Kidney (tissue), 22 donors: ENCODE measurements at regions of chr18 and their contacts with region 1.

Region 1: DNA sequence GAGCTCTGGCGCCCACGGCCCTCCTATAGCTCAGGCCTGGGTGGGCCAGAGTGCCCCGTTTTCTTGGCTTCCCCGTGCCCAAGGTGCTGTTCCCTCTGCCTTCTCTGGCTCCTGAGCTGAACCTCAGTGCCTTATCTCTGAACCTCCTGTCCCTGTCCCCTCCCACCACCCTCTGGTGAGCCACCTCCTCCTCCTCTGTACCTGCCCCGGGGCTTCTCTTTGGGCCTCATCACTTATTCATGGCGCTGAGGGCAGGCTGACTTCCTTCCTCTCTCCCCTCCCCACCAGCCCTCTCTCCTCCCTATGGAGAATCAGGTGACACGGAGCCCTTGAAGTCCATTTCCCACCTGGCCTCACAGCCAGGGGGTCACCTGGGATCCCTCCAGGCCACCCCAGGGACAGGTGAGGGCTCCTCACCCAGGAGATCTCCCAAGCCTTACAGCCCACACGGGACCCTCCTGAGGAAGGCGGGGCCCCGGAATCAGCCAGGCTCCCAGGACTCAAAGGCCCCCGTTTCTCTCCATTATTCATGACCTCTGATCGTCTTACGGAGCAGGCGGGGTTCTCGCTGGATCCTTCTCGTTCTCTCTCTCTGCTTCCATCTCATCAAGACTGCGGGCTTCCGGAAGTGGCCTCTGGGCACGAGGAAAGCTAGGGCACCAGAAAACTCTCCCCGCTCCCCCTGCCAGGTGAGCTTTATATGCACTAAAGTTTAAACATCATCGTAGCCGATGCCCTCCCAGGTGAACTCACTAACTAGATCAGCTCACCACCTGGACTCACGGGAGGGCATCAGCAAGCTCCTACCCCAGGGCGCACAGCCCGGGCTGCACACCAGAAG is at the start of gene LOXHD1:
- DNase-seq: peak in 2 of 5 donors; percentile 25 to 43
- H3K4me3 ChIP-seq: no peak within 1 kb of the TSS
- H3K27ac ChIP-seq: no peak within 1 kb of the TSS
- H3K4me1 ChIP-seq: no peaks in the 10 kb centered on the region
- H3K27me3 ChIP-seq: no peaks in the 10 kb centered on the region
- CTCF ChIP-seq: no peak
- total RNA-seq, gene LOXHD1: 0.25 TPM

Region 2: DNA sequence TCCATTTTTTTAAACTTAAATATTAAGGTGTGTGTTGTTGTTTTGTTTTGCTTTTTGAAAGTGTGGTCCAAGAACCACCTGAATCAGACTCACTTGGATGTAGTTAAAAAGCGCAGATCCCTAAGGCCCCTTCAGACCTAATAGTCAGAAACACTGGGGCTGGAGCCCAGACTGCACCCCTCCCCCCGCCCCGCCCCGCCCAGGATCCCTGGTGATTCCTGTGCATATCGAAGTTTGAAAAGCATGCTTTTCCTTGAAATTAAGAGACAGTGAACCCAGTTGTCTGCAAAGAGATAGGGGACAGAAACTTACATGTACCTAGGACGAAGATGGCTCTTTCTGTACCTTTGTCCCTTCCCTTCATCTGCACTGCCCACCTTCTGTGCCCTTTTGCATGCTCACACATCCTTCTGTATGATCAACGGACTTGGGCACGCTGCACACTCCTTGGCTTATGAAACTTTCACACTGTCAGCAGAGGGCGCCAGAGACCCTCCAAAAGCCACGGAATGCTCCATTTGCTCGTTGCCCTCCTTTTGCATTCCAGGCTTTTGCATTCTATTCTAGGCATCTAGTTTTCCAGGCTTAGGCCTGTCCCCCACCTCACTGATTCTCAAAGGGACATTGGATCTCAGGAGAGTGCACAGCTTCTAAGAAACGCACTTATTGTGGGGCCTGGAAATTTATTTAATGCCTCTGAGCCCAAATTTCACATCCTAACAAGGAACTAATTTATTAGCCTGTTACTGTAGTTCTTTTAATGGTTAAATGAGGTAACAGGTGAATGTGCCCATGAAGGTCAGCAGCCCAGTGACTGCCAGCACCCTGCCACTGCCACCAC is 966.1 kb before region 1 on chr18:
- intact Hi-C with region 1: no loop called
- DNase-seq: peak; percentile 77 to 92 (median 87)
- H3K4me3 ChIP-seq: no peak overlapping the region
- H3K27ac ChIP-seq: no peak overlapping the region
- H3K4me1 ChIP-seq: peaks cover 0 to 2% (median 0%) of the 10 kb centered on the region in 3 donors
- H3K27me3 ChIP-seq: no peaks in the 10 kb centered on the region
- CTCF ChIP-seq: peak; percentile 94

Region 3: GRCh38 chr18:46148810-46149209 is 508.5 kb before region 1 on chr18:
- intact Hi-C with region 1: loop called (anchors 10 kb)
- DNase-seq: peak in 4 of 5 donors; percentile 54 to 68 (median 58)
- H3K4me3 ChIP-seq: no peak overlapping the region
- H3K27ac ChIP-seq: no peak overlapping the region
- H3K4me1 ChIP-seq: no peaks in the 10 kb centered on the region
- H3K27me3 ChIP-seq: no peaks in the 10 kb centered on the region
- CTCF ChIP-seq: peak; percentile 44

Region 4: GRCh38 chr18:46281185-46282176 is 375.9 kb before region 1 on chr18:
- intact Hi-C with region 1: loop called (anchors 5 kb)
- DNase-seq: peak; percentile 79 to 86 (median 82)
- H3K4me3 ChIP-seq: no peak overlapping the region
- H3K27ac ChIP-seq: no peak overlapping the region
- H3K4me1 ChIP-seq: no peaks in the 10 kb centered on the region
- H3K27me3 ChIP-seq: no peaks in the 10 kb centered on the region
- CTCF ChIP-seq: peak; percentile 90

Region 5: GRCh38 chr18:46393230-46393629 is 264.1 kb before region 1 on chr18:
- intact Hi-C with region 1: no loop called
- DNase-seq: peak in 1 of 5 donors; percentile 52
- H3K4me3 ChIP-seq: no peak overlapping the region
- H3K27ac ChIP-seq: no peak overlapping the region
- H3K4me1 ChIP-seq: no peaks in the 10 kb centered on the region
- H3K27me3 ChIP-seq: no peaks in the 10 kb centered on the region
- CTCF ChIP-seq: no peak

Region 6: GRCh38 chr18:46891742-46892214 is 234.4 kb after region 1 on chr18:
- intact Hi-C with region 1: no loop called
- DNase-seq: no peak
- H3K4me3 ChIP-seq: no peak overlapping the region
- H3K27ac ChIP-seq: no peak overlapping the region
- H3K4me1 ChIP-seq: no peaks in the 10 kb centered on the region
- H3K27me3 ChIP-seq: no peaks in the 10 kb centered on the region
- CTCF ChIP-seq: no peak